ENCODE measurements at regions of chr3 and their contacts with region 1.

Region 1: DNA sequence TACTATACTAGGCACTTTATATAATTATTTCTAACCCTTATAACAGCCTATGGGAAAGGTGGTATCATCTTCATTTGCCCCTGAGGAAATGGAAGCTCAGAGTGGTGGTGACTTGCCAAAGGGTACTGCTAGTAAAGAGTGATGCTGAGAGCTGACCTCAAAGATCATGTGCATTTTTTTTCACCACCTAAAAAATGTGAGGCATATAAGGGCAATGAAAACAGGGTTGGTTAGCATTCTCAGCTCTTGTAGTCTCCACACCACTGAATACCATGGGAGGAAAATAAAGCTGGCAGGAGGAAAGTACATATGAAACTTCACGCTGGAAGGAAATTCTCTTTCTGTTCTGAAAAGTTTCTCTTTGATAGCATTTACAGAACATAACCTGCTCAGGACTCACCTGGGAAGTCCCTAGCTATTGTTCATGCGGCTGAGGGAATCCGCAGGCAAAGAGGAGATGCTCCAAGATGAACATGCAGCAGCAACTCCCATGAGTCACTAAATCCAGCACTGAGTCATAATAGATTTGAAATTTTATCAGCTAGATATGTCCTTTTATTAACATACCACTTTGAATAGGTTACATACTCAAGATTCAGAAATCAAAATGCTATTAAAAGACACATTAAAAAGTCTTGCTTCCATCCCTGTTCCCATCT is 17.3 kb downstream of the FAIM start:
- DNase-seq: peak; percentile 95
- H3K4me3 ChIP-seq: no peak overlapping the region
- H3K27ac ChIP-seq: peak overlapping the region; percentile 73
- H3K4me1 ChIP-seq: peaks cover 13% of the 10 kb centered on the region
- H3K27me3 ChIP-seq: no peaks in the 10 kb centered on the region
- CTCF ChIP-seq: no peak

Region 2: GRCh38 chr3:138608322-138609135 is 17.3 kb before region 1 on chr3 and contains the start of gene FAIM:
- CTCF ChIA-PET with region 1: no interaction called
- dilution Hi-C with region 1: no loop called
- in situ Hi-C with region 1: no loop called
- intact Hi-C with region 1: loop called (anchors 1 kb)
- DNase-seq: peak; percentile 68
- H3K4me3 ChIP-seq: peak within 1 kb of the TSS; percentile 59 to 66 (median 61)
- H3K27ac ChIP-seq: peak within 1 kb of the TSS; percentile 76
- H3K4me1 ChIP-seq: peaks cover 12% of the 10 kb centered on the region
- H3K27me3 ChIP-seq: no peaks in the 10 kb centered on the region
- CTCF ChIP-seq: no peak
- total RNA-seq, gene FAIM: 9.7 to 18.2 TPM